Heart right ventricle (tissue), 16 donors: ENCODE measurements at regions of chr19 and their contacts with region 1.

Region 1: DNA sequence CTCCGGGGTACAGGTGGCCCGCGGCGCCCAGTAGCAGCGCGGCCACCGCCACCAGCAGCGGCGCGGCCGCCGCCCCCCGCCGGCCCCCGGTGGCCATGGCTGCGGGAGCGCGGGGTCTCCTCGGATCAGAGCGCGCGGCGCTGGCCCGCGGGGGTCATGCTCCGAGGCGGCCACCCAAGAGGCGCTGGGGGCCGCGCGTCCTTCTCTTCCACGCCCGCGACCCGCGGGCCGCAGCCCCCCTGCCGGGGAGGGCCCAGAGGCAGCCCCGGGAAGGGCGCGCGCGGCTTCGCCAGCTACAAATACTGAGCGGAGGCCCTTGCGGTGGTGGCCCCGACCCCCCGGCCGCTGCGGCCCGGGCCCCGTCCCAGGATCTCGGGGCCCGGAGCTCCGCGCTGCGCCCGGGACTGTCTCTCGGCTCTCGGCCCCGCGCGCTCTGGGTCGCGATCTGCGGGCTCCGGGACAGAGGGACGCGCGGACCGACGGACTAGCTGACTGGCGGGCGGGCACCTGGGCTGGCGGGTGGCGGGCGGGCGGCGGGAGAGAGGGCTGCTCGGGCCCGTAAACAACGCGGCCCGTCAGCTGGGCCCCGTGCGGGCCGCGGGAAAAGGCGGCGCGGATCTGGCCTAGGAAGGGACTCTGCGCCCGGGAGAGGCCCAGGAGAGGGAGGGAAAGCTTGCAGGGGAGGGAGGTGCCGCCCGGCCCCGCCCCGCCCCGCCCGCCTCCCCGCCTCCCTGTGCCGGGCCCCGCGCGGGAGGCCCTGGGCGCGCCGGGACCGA is at the start of gene INSR:
- DNase-seq: peak; percentile 90 to 91
- ATAC-seq: peak; percentile 93 to 96 (median 94)
- H3K4me3 ChIP-seq: peak within 1 kb of the TSS; percentile 87 to 100 (median 96)
- H3K27ac ChIP-seq: peak within 1 kb of the TSS; percentile 89 to 99 (median 97)
- H3K4me1 ChIP-seq: peaks cover 0 to 48% (median 15%) of the 10 kb centered on the region in 9 donors
- H3K27me3 ChIP-seq: no peaks in the 10 kb centered on the region
- CTCF ChIP-seq: no peak
- total RNA-seq, gene INSR: 68.9 to 157 (median 103) TPM

Region 2: DNA sequence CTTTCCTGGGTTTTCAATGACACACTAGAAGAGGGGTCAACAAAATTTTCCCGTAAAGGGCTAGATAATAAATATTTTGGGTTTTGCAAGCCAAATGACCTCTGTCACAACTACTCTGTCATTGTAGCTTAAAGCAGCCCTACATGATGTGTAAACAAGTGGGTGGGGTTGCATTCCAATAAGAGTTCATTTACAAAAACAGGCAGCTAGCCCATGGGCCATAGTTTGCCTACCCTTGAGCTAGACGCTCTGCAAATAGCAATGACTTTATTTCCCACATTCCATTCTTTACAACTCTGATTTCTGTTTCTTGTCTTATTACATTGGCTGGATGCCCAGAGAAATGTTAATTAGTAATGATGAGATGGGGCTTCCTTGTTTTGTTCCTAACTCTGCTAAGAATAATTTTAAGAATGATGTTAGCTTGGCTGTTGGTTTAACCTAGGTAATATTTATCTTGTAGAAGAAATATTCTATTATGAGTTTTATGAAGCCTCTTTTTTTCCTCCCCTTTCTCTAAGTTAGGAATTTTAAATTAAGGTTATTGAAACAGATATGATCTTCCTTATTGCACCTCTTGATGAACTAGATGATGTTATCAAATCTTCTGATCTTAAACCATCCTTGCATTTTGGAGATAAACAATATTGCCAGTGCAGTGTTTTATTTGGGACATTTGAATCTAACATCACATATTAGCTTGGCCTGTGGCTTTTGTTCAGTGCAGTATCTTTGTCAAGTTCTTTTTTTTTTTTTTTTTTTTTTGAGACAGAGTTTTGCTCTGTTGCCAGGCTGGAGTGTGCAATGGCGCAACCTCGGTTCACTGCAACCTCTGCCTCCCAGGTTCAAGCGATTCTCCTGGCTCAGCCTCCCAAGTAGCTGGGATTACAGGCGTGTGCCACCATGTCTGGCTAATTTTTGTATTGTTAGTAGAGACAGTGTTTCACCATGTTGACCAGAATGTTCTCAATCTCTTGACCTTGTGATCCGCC is 148.2 kb before region 1 on chr19:
- intact Hi-C with region 1: loop called in 5 of 10 experiments (anchors 2 to 10 kb)
- DNase-seq: no peak
- ATAC-seq: peak in 1 of 8 donors; percentile 35
- H3K4me3 ChIP-seq: no peak overlapping the region
- H3K27ac ChIP-seq: peak overlapping the region in 1 of 10 donors; percentile 64
- H3K4me1 ChIP-seq: peaks cover 0 to 12% (median 0%) of the 10 kb centered on the region in 9 donors
- H3K27me3 ChIP-seq: no peaks in the 10 kb centered on the region
- CTCF ChIP-seq: no peak

Region 3: DNA sequence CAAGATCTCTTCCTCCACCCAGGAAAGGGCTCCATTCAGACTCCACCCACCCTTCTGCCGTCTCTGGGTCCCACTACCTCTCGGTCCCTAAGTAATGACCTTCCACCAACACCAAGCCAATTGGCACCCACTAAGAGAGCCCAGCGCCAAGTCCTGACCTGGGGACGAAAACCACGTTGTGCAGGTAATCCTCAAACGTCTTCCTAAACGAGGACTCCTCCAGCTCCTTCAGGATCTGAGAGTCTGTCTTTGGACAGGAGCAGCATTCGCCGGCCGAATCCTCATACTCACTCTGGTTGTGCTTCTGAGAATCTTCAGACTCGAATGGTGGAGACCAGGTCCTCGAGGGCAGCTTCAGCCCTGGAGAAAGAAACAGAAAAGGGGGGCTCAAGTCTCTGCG is 141.4 kb before region 1 on chr19:
- intact Hi-C with region 1: loop called in 6 of 10 experiments (anchors 2 to 10 kb)
- DNase-seq: no peak
- ATAC-seq: no peak
- H3K4me3 ChIP-seq: no peak overlapping the region
- H3K27ac ChIP-seq: peak overlapping the region in 2 of 10 donors; percentile 40 to 41
- H3K4me1 ChIP-seq: peaks cover 0 to 8% (median 3%) of the 10 kb centered on the region in 9 donors
- H3K27me3 ChIP-seq: no peaks in the 10 kb centered on the region
- CTCF ChIP-seq: no peak

Region 4: DNA sequence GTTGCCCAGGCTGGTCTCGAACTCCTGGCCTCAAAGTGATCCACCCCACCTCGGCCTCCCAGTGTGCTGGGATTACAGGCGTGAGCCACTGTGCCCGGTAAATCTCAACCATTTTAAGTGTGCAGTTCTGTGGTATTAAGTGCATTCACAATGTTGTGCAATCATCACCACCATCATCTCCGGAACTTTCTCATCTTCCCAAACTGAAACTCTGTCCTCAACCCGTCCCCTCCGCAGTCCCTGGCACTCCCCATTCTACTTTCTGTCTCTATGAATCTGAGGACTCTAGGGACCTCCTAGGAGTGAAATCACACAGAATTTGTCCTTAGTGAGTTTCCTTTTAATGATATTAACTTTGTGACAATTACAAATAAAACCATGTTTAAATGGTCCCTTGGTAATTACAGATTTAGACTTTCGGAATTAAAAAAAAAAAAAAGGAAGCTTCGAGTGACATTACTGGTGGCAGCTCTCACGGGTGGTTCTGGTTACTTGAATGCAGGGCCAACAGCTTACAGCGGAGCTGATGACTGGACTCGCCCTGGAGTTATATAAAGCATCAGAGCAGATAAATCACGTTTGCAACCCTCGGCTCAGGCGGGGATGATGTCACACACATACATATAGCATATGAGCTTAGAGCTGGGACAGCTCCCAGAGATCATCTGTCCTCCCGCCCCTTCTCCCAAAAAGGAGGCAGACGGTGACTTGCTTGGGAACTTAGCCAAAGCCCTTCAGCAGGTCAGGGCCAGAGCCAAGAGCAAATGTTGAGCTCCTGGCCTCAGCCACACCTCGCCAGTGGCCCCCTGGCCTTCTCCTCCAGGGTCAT is 134.7 kb before region 1 on chr19:
- intact Hi-C with region 1: loop called in 7 of 10 experiments (anchors 2 to 10 kb)
- DNase-seq: peak; percentile 59 to 88
- ATAC-seq: peak; percentile 88 to 99 (median 97)
- H3K4me3 ChIP-seq: peak overlapping the region in 3 of 10 donors; percentile 3 to 29 (median 9)
- H3K27ac ChIP-seq: peak overlapping the region; percentile 46 to 93 (median 88)
- H3K4me1 ChIP-seq: peaks cover 0 to 32% (median 16%) of the 10 kb centered on the region in 9 donors
- H3K27me3 ChIP-seq: no peaks in the 10 kb centered on the region
- CTCF ChIP-seq: no peak

Region 5: GRCh38 chr19:7197760-7198696 is 96.0 kb before region 1 on chr19:
- intact Hi-C with region 1: loop called (anchors 1 to 10 kb)
- DNase-seq: peak; percentile 91 to 93
- ATAC-seq: peak; percentile 92 to 95 (median 94)
- H3K4me3 ChIP-seq: peak overlapping the region; percentile 49 to 90 (median 74)
- H3K27ac ChIP-seq: peak overlapping the region; percentile 64 to 92 (median 84)
- H3K4me1 ChIP-seq: peaks cover 5 to 35% (median 19%) of the 10 kb centered on the region in 9 donors
- H3K27me3 ChIP-seq: no peaks in the 10 kb centered on the region
- CTCF ChIP-seq: peak in 6 of 9 donors; percentile 12 to 34 (median 23)

Region 6: DNA sequence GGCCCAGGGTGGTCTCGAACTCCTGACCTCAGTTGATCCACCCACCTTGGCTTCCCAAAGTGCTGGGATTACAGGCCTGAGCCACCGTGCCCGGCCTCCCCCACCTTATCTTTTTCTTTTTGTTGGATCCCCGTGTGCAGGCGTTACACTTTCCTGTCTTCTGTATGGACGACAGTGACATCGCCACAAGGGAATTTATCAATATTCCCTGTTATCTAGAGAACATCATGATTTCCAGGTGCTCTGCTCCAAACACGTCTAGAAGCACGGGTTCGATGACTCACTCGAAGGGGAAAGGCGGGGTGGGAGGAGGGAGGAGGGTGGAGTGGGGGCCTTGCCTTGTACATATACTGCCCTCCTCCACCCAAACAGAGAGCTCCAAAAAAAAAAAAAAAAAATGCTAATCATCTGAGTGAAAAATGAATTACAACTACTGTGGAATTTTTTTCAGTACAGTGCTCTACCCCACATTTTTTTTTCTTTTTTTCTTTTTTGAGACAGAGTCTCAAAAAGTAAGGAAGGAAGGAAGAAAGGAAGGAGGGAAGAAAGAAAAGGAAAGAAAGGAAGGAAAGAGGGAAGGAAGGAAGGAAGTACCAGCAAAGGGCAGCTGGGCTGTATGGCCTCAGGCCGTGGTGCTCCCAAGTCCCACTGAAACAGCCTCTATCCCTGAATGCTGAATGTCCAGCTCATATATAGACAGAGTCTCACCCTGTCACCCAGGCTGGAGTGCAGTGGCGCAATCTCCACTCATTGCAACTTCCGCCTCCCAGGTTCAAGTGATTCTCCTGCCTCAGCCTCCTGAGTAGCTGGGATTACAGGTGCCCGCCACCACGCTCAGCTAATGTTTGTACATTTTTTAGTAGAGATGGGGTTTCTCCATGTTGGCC is 36.6 kb before region 1 on chr19:
- intact Hi-C with region 1: no loop called
- DNase-seq: peak in 1 of 2 donors; percentile 24
- ATAC-seq: peak in 5 of 8 donors; percentile 39 to 82 (median 56)
- H3K4me3 ChIP-seq: no peak overlapping the region
- H3K27ac ChIP-seq: peak overlapping the region in 4 of 10 donors; percentile 35 to 58 (median 44)
- H3K4me1 ChIP-seq: peaks cover 6 to 78% (median 46%) of the 10 kb centered on the region in 9 donors
- H3K27me3 ChIP-seq: no peaks in the 10 kb centered on the region
- CTCF ChIP-seq: no peak

Region 7: DNA sequence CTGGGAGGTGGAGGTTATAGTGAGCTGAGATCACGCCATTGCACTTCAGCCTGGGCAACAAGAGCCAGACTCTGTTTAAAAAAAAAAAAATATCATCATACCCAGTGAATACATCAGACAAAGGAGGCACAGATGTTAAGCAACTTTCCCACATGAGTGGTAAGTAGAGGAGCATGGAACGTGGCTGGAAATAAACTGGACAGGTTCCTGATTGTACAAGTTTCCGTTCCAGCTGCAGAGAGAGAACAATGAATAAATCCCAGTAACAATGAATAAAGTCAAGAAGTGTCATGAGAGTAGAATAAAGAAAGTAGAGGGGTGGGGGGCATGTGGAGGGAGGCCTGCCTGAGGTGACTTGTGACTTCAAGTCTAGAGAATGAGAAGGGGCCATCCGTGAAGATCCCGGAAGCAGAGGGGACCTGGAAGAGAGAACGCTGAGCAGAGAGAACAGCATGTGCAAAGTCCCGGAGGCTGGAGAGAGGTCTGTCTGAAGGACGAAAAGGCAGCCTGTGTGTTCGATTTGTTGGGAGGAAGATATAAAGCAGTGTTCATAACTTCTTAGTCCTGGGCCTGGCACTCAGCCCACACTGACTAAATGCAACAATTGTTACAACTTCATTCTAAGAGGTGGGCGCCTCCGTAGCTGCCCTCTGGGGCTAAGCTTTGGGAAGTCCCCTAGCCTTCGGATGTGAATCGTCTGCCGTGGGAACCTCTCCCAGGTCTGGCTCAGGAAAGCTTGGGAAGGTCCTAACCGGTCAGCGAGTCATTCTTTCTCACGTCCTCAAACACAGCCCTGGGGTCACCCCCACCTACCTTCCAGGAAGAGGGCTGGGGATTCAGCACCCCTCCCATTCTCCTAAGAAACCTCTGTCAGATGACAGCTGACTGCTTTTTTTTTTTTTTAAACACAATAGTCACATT is 39.5 kb after region 1 on chr19:
- intact Hi-C with region 1: loop called in 3 of 10 experiments (anchors 5 kb)
- DNase-seq: peak in 1 of 2 donors; percentile 64
- ATAC-seq: peak; percentile 59 to 94 (median 82)
- H3K4me3 ChIP-seq: no peak overlapping the region
- H3K27ac ChIP-seq: peak overlapping the region in 8 of 10 donors; percentile 10 to 77 (median 62)
- H3K4me1 ChIP-seq: peaks cover 0 to 43% (median 23%) of the 10 kb centered on the region in 9 donors
- H3K27me3 ChIP-seq: no peaks in the 10 kb centered on the region
- CTCF ChIP-seq: no peak

Region 8: GRCh38 chr19:7340959-7341837 is 47.2 kb after region 1 on chr19:
- intact Hi-C with region 1: loop called in 2 of 10 experiments (anchors 5 kb)
- DNase-seq: peak; percentile 78 to 86
- ATAC-seq: peak; percentile 27 to 62 (median 56)
- H3K4me3 ChIP-seq: no peak overlapping the region
- H3K27ac ChIP-seq: peak overlapping the region in 1 of 10 donors; percentile 42
- H3K4me1 ChIP-seq: peaks cover 0 to 50% (median 6%) of the 10 kb centered on the region in 9 donors
- H3K27me3 ChIP-seq: peaks cover 0 to 18% (median 0%) of the 10 kb centered on the region in 7 donors
- CTCF ChIP-seq: peak; percentile 92 to 97 (median 95)

Region 9: DNA sequence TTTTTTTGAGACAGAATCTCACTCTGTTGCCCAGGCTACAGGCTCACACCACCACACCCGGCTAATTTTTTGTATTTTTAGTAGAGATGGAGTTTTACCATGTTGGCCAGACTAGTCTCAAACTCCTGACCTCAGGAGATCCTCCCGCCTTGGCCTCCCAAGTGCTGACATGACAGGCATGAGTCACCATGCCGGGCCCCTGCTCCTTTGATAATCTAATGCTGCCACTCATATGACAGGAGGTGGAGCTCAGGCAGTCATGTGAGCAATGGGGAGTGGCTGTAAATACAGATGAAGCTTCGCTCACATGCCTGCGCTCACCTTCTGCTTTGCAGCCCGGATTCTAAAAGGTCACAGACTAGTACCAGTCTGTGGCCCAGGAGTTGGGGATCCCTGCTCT is 79.9 kb after region 1 on chr19:
- intact Hi-C with region 1: no loop called
- DNase-seq: no peak
- ATAC-seq: no peak
- H3K4me3 ChIP-seq: no peak overlapping the region
- H3K27ac ChIP-seq: no peak overlapping the region
- H3K4me1 ChIP-seq: no peaks in the 10 kb centered on the region
- H3K27me3 ChIP-seq: no peaks in the 10 kb centered on the region
- CTCF ChIP-seq: no peak

Region 10: GRCh38 chr19:7386308-7386707 is 92.3 kb after region 1 on chr19:
- intact Hi-C with region 1: no loop called
- DNase-seq: no peak
- ATAC-seq: no peak
- H3K4me3 ChIP-seq: no peak overlapping the region
- H3K27ac ChIP-seq: no peak overlapping the region
- H3K4me1 ChIP-seq: peaks cover 0 to 22% (median 0%) of the 10 kb centered on the region in 9 donors
- H3K27me3 ChIP-seq: no peaks in the 10 kb centered on the region
- CTCF ChIP-seq: no peak